ENCODE measurements at regions of chr15 and their contacts with region 1.

Region 1: DNA sequence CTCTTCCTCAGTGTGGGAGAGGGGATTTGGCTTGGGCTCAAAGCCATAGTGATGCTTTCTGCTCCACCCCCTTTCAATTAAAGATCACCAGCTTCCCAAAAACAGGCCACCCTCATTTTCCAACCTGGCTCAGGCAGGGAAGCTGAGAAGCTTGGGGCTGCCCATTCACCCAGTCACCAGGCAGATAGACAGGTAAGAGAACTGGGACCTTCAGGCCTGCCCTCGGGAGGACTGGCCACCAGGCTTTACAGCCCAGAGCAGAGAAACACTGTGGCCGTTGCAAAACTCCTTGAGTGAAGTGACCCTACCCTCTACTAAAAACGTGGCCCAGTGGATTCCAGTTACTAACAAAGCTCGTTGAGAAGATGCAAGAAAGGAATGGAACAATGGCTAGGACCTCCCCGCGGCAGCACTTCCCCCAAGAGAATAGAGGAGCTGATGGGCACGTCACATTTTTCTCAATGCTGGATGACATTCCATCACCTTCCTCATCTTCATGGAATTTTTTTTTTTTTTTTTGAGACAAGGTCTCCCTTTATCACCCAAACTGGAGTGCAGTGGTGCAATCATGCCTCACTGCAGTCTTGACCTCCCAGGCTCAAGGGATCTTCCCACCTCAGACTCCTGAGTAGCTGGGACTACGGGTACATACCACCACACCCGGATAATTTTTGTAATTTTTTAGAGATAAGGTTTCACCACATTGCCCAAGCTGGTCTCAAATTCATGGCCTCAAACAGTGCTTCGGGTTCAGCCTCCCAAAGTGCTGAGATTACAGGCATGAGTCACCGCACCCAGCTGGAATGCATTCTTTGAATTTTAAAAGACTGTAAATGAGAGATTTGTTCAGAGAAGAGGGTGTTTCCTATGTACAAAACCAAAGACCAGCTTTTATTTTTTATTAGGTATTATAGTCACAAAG is 37.9 kb downstream of the LIPC start:
- DNase-seq: peak; percentile 92
- H3K4me3 ChIP-seq: no peak overlapping the region
- CTCF ChIP-seq: no peak

Region 2: DNA sequence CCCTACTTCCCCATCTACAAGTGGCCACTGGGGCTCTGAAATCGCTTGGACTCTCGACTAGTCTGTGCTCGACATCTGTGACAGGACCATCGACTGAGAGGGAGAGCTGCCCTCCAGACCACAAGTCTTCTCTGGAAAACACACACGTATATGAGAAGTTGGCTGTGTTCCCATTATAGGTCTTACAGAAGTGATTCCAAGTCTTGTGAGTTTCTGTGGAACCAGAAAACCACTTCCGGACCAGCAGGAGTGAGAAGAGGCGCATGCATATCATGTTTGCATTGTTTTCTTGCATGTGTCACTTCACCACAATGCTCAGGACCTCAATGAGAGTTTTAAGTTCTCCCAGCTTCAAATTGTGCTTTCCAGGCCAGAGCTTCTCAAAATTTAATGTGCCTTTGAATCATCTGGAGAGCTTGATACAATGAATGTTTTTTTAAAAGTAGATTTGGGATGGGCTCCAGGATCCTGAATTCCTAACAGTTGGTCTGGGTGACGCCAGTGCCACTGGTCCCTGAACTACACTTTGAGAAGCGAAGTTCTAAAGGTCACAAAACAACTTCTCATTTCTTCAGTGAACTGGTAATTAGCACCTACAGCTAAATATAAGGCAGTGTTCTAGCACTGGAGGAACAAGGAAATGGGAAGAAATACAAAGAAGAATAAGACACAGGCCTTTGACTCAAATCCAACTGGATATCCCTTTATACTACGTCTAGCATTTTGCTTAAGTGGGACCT is 22.3 kb before region 1 on chr15:
- CTCF ChIA-PET with region 1: no interaction called
- POLR2A ChIA-PET with region 1: no interaction called
- DNase-seq: peak; percentile 59
- H3K4me3 ChIP-seq: no peak overlapping the region
- CTCF ChIP-seq: no peak

Region 3: GRCh38 chr15:58457381-58457965 is 12.2 kb before region 1 on chr15:
- CTCF ChIA-PET with region 1: interaction called, 14 read pairs
- POLR2A ChIA-PET with region 1: interaction called, 5 read pairs
- DNase-seq: no peak
- H3K4me3 ChIP-seq: no peak overlapping the region
- CTCF ChIP-seq: no peak

Region 4: DNA sequence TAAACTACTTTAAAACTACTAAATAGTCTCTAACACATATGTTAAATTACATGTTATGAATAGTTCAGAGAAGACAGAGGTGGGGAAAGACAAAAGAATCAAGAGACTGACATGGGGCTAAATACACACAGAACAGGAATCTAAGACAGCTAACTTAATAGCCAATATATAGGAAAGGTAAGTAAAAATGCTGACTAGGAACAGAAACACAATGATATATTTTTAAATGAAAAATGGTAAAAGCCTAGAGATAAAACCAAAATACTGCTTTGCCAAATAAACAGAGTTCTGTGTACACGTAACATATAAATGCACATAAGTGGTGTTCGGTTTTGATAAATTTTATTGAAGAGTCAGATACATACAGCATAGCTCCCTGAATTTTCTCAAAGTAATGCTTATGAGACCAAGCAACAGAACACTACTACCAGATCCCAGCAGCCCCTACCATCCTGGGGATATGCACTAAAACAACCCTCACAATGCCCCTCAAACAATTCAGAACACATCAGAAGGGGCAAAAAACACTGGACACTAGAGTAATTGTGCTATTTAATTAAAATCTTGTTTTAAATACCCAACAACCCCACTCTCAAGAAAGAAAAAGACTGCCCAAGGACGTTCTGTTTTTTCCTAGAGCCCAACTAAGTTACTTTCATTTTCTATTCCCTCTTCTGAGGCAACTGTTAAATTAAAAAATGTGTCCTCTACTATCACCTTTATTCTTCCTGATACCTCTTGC is 158.7 kb after region 1 on chr15:
- CTCF ChIA-PET with region 1: no interaction called
- POLR2A ChIA-PET with region 1: no interaction called
- DNase-seq: no peak
- H3K4me3 ChIP-seq: peak overlapping the region; percentile 21
- CTCF ChIP-seq: no peak

Measured in AG04449 (cell line).